ENCODE measurements at regions of chr3 and their contacts with region 1.

Region 1: GRCh38 chr3:9932843-9933560 is 632 bp upstream of the CRELD1 start:
- DNase-seq: peak; percentile 78 to 94 (median 85)
- ATAC-seq: peak; percentile 50
- H3K4me3 ChIP-seq: peak overlapping the region; percentile 65
- H3K4me3 Mint-ChIP-seq: peak overlapping the region; percentile 99
- H3K27ac ChIP-seq: peak overlapping the region; percentile 90 to 91
- H3K27ac Mint-ChIP-seq: peak overlapping the region; percentile 99
- H3K4me1 ChIP-seq: peaks cover 45% of the 10 kb centered on the region
- H3K4me1 Mint-ChIP-seq: peaks cover 65% of the 10 kb centered on the region
- H3K27me3 ChIP-seq: no peaks in the 10 kb centered on the region
- H3K27me3 Mint-ChIP-seq: no peaks in the 10 kb centered on the region
- CTCF ChIP-seq: peak; percentile 87

Region 2: GRCh38 chr3:9649791-9650521 is 283.0 kb before region 1 on chr3:
- CTCF ChIA-PET with region 1: no interaction called
- POLR2A ChIA-PET with region 1: interaction called, 21 read pairs
- intact Hi-C with region 1: no loop called
- DNase-seq: peak in 3 of 14 experiments; percentile 40 to 57 (median 53)
- ATAC-seq: no peak
- H3K4me3 ChIP-seq: peak overlapping the region; percentile 92
- H3K4me3 Mint-ChIP-seq: peak overlapping the region; percentile 96
- H3K27ac ChIP-seq: peak overlapping the region; percentile 78 to 92
- H3K27ac Mint-ChIP-seq: peak overlapping the region; percentile 87
- H3K4me1 ChIP-seq: peaks cover 36% of the 10 kb centered on the region
- H3K4me1 Mint-ChIP-seq: peaks cover 35% of the 10 kb centered on the region
- H3K27me3 ChIP-seq: no peaks in the 10 kb centered on the region
- H3K27me3 Mint-ChIP-seq: no peaks in the 10 kb centered on the region
- CTCF ChIP-seq: no peak

Region 3: DNA sequence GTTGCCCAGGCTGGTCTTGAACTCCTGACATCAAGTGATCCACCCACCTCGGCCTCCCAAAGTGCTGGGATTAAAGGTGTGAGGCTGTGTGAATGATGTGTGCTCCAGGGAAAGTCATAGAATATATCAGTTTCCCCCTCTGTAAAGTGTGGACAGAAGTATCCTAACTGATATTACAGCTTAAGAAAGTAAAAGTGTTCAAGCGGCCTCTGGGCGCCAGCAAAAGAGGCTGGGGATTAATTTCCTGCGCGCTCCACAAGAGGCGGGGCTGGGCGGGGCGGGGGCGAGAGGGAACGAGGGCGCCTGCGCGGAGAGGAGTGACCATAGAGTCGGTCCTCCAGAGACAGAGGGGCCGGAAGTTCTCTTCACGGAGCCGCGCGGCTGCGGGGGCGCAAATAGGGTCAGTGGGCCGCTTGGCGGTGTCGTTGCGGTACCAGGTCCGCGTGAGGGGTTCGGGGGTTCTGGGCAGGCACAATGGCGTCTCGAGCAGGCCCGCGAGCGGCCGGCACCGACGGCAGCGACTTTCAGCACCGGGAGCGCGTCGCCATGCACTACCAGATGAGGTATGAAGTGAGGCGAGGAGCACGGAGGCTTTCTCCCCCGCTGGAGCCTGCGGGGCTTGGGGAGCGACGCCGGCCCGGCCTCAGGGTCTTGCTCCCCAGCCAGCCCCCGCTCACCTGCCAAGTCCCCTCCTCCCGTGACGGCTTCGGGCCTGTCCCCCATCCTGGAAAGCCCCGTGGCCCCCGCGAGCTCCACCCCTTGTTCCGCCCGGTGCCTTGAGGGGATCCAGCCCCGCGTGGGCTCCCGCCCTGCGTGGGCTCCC is 42.5 kb before region 1 on chr3 and contains the start of gene JAGN1:
- CTCF ChIA-PET with region 1: interaction called, 14 read pairs
- POLR2A ChIA-PET with region 1: interaction called, 98 read pairs
- intact Hi-C with region 1: loop called (anchors 2 kb)
- DNase-seq: peak; percentile 84 to 96 (median 91)
- ATAC-seq: peak; percentile 91
- H3K4me3 ChIP-seq: peak within 1 kb of the TSS; percentile 95
- H3K4me3 Mint-ChIP-seq: peak within 1 kb of the TSS; percentile 99
- H3K27ac ChIP-seq: peak within 1 kb of the TSS; percentile 99 to 100
- H3K27ac Mint-ChIP-seq: peak within 1 kb of the TSS; percentile 95
- H3K4me1 ChIP-seq: peaks cover 20% of the 10 kb centered on the region
- H3K4me1 Mint-ChIP-seq: peaks cover 49% of the 10 kb centered on the region
- H3K27me3 ChIP-seq: no peaks in the 10 kb centered on the region
- H3K27me3 Mint-ChIP-seq: no peaks in the 10 kb centered on the region
- CTCF ChIP-seq: no peak
- total RNA-seq, gene JAGN1: 14.4 to 15.1 TPM

Region 4: GRCh38 chr3:9951962-9952805 is 19.2 kb after region 1 on chr3 and contains the start of gene PRRT3:
- CTCF ChIA-PET with region 1: interaction called, 20 read pairs
- POLR2A ChIA-PET with region 1: interaction called, 86 read pairs
- intact Hi-C with region 1: loop called in 1 of 2 experiments (anchors 2 kb)
- DNase-seq: peak; percentile 37 to 74 (median 52)
- ATAC-seq: peak; percentile 95
- H3K4me3 ChIP-seq: peak within 1 kb of the TSS; percentile 77
- H3K4me3 Mint-ChIP-seq: peak within 1 kb of the TSS; percentile 88
- H3K27ac ChIP-seq: no peak within 1 kb of the TSS
- H3K27ac Mint-ChIP-seq: peak within 1 kb of the TSS; percentile 41
- H3K4me1 ChIP-seq: peaks cover 21% of the 10 kb centered on the region
- H3K4me1 Mint-ChIP-seq: peaks cover 21% of the 10 kb centered on the region
- H3K27me3 ChIP-seq: no peaks in the 10 kb centered on the region
- H3K27me3 Mint-ChIP-seq: no peaks in the 10 kb centered on the region
- CTCF ChIP-seq: no peak
- total RNA-seq, gene PRRT3: 6.3 to 8.3 TPM

Region 5: DNA sequence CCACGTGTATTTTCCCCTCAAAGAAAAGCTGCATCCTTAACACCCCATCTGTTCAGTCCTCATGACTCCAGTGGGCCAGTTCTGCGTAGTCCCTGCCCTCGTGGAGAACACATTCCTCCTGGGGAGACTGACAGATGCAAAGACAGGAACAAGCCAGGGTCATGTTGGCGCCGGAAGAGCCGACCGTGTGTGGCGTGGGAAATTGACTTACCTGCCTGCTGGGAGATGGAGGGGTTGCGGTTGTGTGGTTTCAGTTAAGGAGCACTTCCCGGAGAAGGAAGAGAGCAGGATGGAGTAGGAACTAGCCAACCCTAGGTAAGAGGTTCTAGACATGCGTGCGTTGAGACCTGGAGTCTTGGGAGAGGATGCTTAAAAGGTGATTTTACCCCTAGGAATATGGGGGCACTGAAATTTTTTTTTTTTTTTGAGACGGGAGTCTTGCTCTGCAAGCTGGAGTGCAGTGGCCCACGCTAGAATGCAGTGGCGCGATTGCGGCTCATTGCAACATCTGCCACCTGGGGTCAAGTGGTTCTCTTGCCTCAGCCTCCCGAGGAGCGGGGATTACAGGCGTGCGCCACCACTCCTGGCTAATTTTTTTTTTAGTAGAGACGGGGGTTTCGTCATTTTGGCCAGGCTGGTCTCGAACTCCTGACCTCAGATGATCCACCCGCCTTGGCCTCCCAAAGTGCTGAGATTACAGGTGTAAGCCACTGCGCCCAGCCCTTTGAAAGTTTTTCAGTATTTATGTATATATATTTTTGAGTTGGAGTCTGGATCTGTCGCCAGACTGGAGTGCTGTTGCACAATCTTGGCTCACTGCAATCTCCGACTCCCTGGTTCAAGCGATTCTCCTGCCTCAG is 209.9 kb after region 1 on chr3:
- CTCF ChIA-PET with region 1: no interaction called
- POLR2A ChIA-PET with region 1: interaction called, 10 read pairs
- intact Hi-C with region 1: loop called in 1 of 2 experiments (anchors 10 kb)
- DNase-seq: peak in 5 of 14 experiments; percentile 1 to 54 (median 42)
- ATAC-seq: no peak
- H3K4me3 ChIP-seq: peak overlapping the region; percentile 85
- H3K4me3 Mint-ChIP-seq: peak overlapping the region; percentile 90
- H3K27ac ChIP-seq: peak overlapping the region in 1 of 2 donors; percentile 22
- H3K27ac Mint-ChIP-seq: peak overlapping the region; percentile 85
- H3K4me1 ChIP-seq: peaks cover 54% of the 10 kb centered on the region
- H3K4me1 Mint-ChIP-seq: peaks cover 40% of the 10 kb centered on the region
- H3K27me3 ChIP-seq: no peaks in the 10 kb centered on the region
- H3K27me3 Mint-ChIP-seq: no peaks in the 10 kb centered on the region
- CTCF ChIP-seq: no peak

Region 6: DNA sequence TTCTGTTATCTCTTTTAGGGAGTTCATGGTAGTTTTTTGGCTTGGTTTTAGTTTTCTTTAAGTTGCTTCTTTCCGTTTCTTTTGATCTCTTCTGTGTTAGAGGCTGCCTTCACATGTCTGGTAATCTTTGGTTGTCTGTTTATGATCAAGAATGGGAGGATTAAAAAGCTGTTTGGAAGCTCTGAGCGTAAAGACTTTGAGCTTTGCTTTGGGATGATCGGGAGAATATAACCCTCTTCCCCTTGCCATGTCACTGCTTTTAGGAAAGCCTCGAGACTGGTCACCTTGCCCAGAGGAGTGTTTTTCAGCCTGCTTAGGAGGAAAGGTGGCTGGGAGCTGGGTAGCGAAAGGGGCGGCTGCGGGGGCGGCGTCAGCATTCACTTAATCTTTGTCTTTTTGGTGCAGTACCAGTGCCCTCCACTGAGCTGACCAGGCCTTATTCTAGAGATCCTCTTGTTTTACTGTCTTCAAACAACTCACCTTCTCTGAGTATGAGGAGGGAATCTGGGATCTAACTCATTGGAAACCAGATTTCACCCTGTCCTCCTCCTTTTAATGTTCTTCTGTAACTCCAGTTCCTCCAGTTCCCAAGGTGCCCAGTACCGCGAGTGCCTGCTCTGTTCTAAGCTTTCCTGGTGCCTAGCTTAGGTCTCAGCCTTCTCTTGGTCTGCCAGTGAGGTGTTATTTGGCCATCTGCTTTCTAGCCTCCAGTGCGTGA is 330.8 kb after region 1 on chr3:
- CTCF ChIA-PET with region 1: interaction called, 4 read pairs
- POLR2A ChIA-PET with region 1: interaction called, 21 read pairs
- intact Hi-C with region 1: no loop called
- DNase-seq: peak; percentile 36 to 83 (median 64)
- ATAC-seq: peak; percentile 93
- H3K4me3 ChIP-seq: peak overlapping the region; percentile 41
- H3K4me3 Mint-ChIP-seq: peak overlapping the region; percentile 60
- H3K27ac ChIP-seq: peak overlapping the region; percentile 64 to 79
- H3K27ac Mint-ChIP-seq: peak overlapping the region; percentile 87
- H3K4me1 ChIP-seq: peaks cover 63% of the 10 kb centered on the region
- H3K4me1 Mint-ChIP-seq: peaks cover 86% of the 10 kb centered on the region
- H3K27me3 ChIP-seq: no peaks in the 10 kb centered on the region
- H3K27me3 Mint-ChIP-seq: no peaks in the 10 kb centered on the region
- CTCF ChIP-seq: peak; percentile 68

Measured in CD4-positive, alpha-beta T cell (primary cell).